ENCODE measurements at regions of chr20 and their contacts with region 1.

Region 1: GRCh38 chr20:5119435-5120188 is at the start of gene PCNA:
- DNase-seq: peak; percentile 94 to 96
- ATAC-seq: peak; percentile 97
- H3K4me3 ChIP-seq: peak within 1 kb of the TSS; percentile 75 to 95 (median 90)
- H3K27ac ChIP-seq: peak within 1 kb of the TSS; percentile 81 to 96 (median 89)
- H3K4me1 ChIP-seq: peaks cover 11 to 15% of the 10 kb centered on the region in 2 donors
- H3K27me3 ChIP-seq: no peaks in the 10 kb centered on the region
- CTCF ChIP-seq: peak in 1 of 5 experiments; percentile 14
- POLR2A ChIP-seq: peak; percentile 85 to 96
- total RNA-seq, gene PCNA: 19.1 to 40.0 (median 25.4) TPM

Region 2: DNA sequence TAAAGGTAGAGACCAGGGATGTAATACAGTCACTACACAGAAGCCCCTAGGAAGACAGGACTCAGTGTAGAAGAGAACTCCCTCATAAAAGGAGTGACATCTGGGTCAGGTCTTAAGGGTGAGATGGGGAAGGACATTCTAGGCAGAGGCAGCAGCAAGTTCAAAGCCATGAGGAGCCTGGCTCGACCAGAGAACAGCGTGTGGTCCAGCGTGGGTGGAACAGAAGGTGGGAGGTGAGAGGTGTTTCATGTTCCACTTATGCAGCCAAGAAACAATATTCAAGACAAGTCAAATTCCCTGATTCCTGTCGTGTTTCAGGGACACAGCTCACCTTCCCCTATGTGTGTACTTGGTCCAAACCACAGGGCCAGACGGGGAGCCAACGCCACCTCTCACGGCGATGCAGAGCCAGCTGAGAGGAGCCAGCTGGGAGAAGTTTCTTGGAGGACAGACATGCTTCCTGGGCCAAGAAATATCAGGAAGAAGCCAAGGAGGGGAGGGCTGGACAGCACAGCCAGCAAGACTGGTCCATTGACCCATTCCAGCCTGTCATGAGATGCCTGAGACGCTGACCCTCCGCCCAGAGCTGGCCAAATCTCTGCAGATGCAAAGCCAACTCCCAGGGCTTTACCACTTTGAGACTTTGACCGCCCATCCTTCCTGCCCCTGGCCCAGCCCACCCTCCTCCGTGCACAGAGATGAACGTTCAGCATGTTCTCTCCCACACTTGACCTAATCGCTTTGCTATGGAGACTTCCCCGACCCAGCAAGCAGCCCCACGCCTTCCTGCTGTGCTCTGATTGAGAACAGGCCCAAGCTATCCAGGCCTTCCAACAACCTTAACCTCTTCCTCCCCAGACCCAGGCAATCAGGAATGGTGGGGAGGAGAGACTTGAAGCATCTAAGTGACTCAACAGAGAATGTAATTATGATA is 284.1 kb before region 1 on chr20:
- in situ Hi-C with region 1: no loop called
- intact Hi-C with region 1: no loop called
- DNase-seq: peak in 1 of 2 donors; percentile 33
- ATAC-seq: peak; percentile 49 to 52
- H3K4me3 ChIP-seq: no peak overlapping the region
- H3K27ac ChIP-seq: no peak overlapping the region
- H3K4me1 ChIP-seq: no peaks in the 10 kb centered on the region
- H3K27me3 ChIP-seq: peaks cover 3 to 11% (median 4%) of the 10 kb centered on the region in 3 donors
- CTCF ChIP-seq: no peak
- POLR2A ChIP-seq: no peak

Region 3: DNA sequence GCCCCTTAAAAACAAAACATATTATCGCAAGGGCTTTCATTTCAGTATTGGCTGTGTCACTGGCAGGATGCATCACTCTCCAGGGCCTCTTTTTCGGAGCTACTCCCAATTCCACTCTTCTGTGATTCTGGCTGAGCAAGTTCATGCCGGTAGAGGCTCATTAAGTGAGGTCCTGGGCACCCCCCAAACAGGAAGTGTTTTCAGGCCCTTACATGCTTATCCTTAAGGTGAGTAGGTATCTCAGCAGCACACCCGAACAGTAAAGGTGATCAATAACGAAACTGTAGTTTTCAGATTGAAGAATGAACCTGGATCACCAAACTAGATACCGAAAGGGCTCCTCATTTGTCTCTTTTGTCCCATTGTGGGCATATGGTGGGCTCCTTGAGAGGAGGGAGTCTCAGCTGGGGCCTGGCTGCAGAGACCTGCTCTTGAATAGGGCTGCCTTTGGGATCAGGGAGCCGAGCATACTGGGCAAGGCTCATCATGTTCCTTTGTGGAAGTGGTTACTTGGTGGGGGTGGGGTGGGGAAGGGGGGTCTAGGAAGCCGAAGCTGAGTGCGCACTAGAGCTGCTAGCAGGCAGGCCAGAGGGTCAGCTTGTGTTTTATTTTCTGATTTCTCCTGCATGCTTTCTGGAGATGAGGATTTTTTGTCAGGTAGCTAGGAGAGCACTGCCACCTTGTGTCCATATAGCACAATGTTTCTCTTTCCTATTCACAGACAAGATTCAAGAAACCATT is 72.4 kb after region 1 on chr20:
- in situ Hi-C with region 1: loop called in 2 of 4 experiments (anchors 5 to 10 kb)
- intact Hi-C with region 1: no loop called
- DNase-seq: peak in 1 of 2 donors; percentile 46
- ATAC-seq: peak; percentile 67 to 89
- H3K4me3 ChIP-seq: no peak overlapping the region
- H3K27ac ChIP-seq: peak overlapping the region; percentile 46 to 80 (median 68)
- H3K4me1 ChIP-seq: peaks cover 6 to 22% of the 10 kb centered on the region in 2 donors
- H3K27me3 ChIP-seq: no peaks in the 10 kb centered on the region
- CTCF ChIP-seq: peak; percentile 76 to 82 (median 80)
- POLR2A ChIP-seq: no peak

Measured in gastrocnemius medialis (tissue), 4 donors.